IMR-90 (cell line): ENCODE measurements at regions of chr3 and their contacts with region 1.

Region 1: GRCh38 chr3:101311676-101312075 is 8.7 kb downstream of the IMPG2 start:
- DNase-seq: no peak
- ATAC-seq: no peak
- H3K4me3 ChIP-seq: no peak overlapping the region
- H3K27ac ChIP-seq: no peak overlapping the region
- H3K4me1 ChIP-seq: 0 out of 2 replicates have a peak, but pooled peaks cover 2% of the 10 kb centered on the region
- H3K27me3 ChIP-seq: no peaks in the 10 kb centered on the region
- CTCF ChIP-seq: no peak
- POLR2A ChIP-seq: no peak
- RAD21 ChIP-seq: no peak

Region 2: DNA sequence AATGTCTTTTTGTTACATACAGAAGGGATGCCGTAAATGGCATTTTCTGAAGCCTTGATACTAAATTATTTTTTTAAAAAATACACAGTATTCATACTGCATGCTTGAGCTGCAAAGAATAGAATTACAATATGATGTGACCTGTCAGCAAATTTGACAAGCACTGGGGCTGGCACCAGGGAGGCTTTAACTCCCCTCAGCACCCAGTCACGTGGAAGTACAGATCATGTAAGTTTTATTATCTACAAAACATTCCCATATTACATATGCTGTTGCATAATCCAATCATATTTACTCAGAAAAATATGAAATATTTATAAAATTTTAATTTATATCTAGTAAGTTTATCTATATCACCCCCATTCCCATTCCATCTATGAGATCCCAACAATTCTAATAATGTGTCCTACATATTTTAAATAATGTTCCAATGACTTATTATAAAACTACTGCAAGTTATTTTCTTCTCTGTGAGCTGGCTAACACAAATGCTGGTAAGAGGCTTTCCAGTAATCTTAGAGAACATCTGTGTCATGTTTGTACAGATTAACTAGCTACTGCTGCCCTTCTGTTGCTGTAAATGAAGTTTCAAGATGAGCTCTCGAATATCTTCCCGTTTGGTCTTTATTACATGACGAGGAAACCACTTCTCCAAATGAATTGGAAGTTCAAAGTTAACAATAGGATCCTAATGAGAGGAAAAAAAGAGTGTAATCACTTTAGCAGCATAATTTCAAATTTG is 13.9 kb after region 1 on chr3:
- CTCF ChIA-PET with region 1: interaction called, 7 read pairs
- POLR2A ChIA-PET with region 1: no interaction called
- dilution Hi-C with region 1: no loop called
- in situ Hi-C with region 1: no loop called
- intact Hi-C with region 1: loop called (anchors 2 kb)
- DNase-seq: no peak
- ATAC-seq: no peak
- H3K4me3 ChIP-seq: no peak overlapping the region
- H3K27ac ChIP-seq: no peak overlapping the region
- H3K4me1 ChIP-seq: no peaks in the 10 kb centered on the region
- H3K27me3 ChIP-seq: no peaks in the 10 kb centered on the region
- CTCF ChIP-seq: no peak
- POLR2A ChIP-seq: no peak
- RAD21 ChIP-seq: no peak